CD8-positive, alpha-beta T cell (primary cell): ENCODE measurements at regions of chr13 and their contacts with region 1.

Region 1: DNA sequence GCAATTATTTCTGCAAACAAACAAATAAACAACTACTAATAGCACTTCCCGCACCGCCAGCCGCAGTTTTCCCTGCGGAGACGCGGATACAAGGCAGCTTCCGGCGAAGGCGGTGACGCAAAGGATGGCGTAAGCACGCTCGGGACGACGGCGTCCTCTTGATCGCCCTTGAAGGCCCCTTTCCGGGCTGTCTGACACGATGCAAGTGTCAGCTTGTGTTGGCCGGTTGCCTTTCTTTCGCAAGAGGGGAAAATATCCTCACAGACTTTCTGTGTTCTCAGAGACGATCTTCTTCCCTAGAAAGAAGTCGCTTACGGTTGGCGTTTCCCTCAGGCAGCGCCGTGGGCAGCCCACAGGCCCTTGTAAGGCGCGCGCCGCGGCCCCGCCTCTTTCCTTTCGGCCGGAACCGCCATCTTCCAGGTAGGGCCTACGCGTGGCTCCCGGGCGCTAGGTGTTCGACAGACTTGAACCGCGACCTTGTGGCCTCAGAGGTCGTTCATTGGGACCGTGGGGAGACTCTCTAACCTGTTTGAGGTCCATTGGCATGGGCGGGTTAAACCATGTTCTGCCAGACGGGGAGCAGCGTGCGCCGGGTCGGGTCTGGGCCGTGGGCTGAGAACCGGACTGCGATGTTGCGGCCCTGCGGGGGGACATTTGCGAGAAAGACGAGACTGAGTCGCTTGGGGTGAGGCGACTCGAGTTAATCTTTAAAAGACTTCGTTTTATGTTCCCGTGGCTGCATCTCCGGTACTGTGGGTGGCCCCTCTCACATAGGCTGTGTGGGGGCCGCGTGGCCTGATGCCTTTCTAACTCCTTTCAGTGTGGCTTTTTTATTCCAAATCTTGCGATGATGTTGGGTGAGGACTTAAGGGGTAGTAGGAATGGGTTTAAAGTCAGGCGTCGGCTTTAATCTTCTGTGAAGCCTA is at the start of gene RPL21:
- DNase-seq: peak; percentile 85 to 98 (median 91)
- ATAC-seq: peak; percentile 88
- H3K4me3 ChIP-seq: peak within 1 kb of the TSS; percentile 88 to 93
- H3K4me3 Mint-ChIP-seq: peak within 1 kb of the TSS; percentile 99
- H3K27ac ChIP-seq: peak within 1 kb of the TSS; percentile 96 to 98
- H3K27ac Mint-ChIP-seq: peak within 1 kb of the TSS; percentile 100
- H3K4me1 ChIP-seq: peaks cover 30% of the 10 kb centered on the region
- H3K4me1 Mint-ChIP-seq: peaks cover 57% of the 10 kb centered on the region
- H3K27me3 ChIP-seq: no peaks in the 10 kb centered on the region
- H3K27me3 Mint-ChIP-seq: no peaks in the 10 kb centered on the region
- CTCF ChIP-seq: no peak
- total RNA-seq, gene RPL21: 2,340 to 2,437 TPM

Region 2: GRCh38 chr13:25286969-25287961 is 1964.2 kb before region 1 on chr13 and contains the start of gene MTMR6:
- CTCF ChIA-PET with region 1: no interaction called
- POLR2A ChIA-PET with region 1: no interaction called
- intact Hi-C with region 1: loop called in 1 of 2 experiments (anchors 5 kb)
- DNase-seq: peak; percentile 90 to 98 (median 94)
- ATAC-seq: peak; percentile 81
- H3K4me3 ChIP-seq: peak within 1 kb of the TSS; percentile 83 to 95
- H3K4me3 Mint-ChIP-seq: peak within 1 kb of the TSS; percentile 98
- H3K27ac ChIP-seq: peak within 1 kb of the TSS; percentile 94 to 97
- H3K27ac Mint-ChIP-seq: peak within 1 kb of the TSS; percentile 99
- H3K4me1 ChIP-seq: peaks cover 23% of the 10 kb centered on the region
- H3K4me1 Mint-ChIP-seq: peaks cover 41% of the 10 kb centered on the region
- H3K27me3 ChIP-seq: peaks cover 0 to 2% of the 10 kb centered on the region in 2 experiments
- H3K27me3 Mint-ChIP-seq: peaks cover 10% of the 10 kb centered on the region
- CTCF ChIP-seq: peak; percentile 99
- total RNA-seq, gene MTMR6: 41.9 to 44.4 TPM

Region 3: DNA sequence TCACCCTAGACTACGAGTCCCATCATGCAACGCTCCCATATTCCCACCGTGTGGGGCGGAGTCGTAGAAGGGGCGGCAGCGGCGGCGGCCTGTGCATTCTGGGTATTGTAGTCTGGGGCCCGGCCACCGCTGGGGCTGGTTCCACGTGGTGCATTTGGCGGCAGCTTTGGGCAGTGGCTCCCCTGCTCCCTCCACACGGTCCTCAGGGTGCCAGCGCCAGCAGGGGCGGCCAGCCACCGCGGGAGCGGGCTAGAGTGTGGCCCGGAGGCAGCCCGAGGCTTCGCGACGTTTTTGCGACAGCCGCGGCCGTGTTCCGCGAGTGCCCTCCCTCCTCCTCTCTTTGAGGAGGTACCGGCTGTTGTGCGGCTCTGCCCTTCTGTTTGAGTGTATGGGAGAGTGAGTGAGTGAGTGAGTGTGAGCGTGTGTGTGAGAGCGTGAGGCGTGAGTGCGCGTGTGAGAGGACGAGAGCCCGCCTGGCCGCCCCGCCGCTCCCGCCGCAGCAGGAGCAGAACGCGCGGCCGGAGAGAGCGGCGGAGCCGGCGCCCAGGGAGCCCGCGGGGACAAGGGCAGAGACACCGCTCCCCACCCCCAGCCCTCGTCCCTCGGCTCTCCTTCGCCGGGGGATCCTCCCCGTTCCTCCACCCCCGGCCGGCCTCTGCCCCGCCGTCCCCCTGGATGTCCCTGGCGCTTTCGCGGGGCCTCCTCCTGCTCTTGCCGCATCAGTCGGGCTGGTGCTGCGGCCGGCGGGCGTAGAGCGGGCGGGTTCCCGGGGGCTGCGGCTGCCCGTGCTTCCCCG is 997.4 kb before region 1 on chr13 and contains the start of gene CDK8:
- CTCF ChIA-PET with region 1: no interaction called
- POLR2A ChIA-PET with region 1: no interaction called
- intact Hi-C with region 1: loop called in 1 of 2 experiments (anchors 5 kb)
- DNase-seq: peak; percentile 78 to 95 (median 90)
- ATAC-seq: peak; percentile 87
- H3K4me3 ChIP-seq: peak within 1 kb of the TSS; percentile 79 to 100
- H3K4me3 Mint-ChIP-seq: peak within 1 kb of the TSS; percentile 90
- H3K27ac ChIP-seq: peak within 1 kb of the TSS; percentile 59 to 92
- H3K27ac Mint-ChIP-seq: peak within 1 kb of the TSS; percentile 88
- H3K4me1 ChIP-seq: peaks cover 27% of the 10 kb centered on the region
- H3K4me1 Mint-ChIP-seq: peaks cover 37% of the 10 kb centered on the region
- H3K27me3 ChIP-seq: no peaks in the 10 kb centered on the region
- H3K27me3 Mint-ChIP-seq: peaks cover 2% of the 10 kb centered on the region
- CTCF ChIP-seq: no peak
- total RNA-seq, gene CDK8: 4.9 to 5.3 TPM

Region 4: GRCh38 chr13:27270594-27271520 is 19.4 kb after region 1 on chr13 and contains the start of gene RASL11A:
- CTCF ChIA-PET with region 1: interaction called, 10 read pairs
- POLR2A ChIA-PET with region 1: interaction called, 7 read pairs
- intact Hi-C with region 1: loop called (anchors 1 to 2 kb)
- DNase-seq: peak; percentile 49 to 85 (median 74)
- ATAC-seq: peak; percentile 93
- H3K4me3 ChIP-seq: peak within 1 kb of the TSS; percentile 58 to 88
- H3K4me3 Mint-ChIP-seq: peak within 1 kb of the TSS; percentile 92
- H3K27ac ChIP-seq: peak within 1 kb of the TSS in 1 of 2 experiments; percentile 46
- H3K27ac Mint-ChIP-seq: peak within 1 kb of the TSS; percentile 86
- H3K4me1 ChIP-seq: peaks cover 9% of the 10 kb centered on the region
- H3K4me1 Mint-ChIP-seq: peaks cover 25% of the 10 kb centered on the region
- H3K27me3 ChIP-seq: no peaks in the 10 kb centered on the region
- H3K27me3 Mint-ChIP-seq: peaks cover 2% of the 10 kb centered on the region
- CTCF ChIP-seq: peak; percentile 98
- total RNA-seq, gene RASL11A: 9.0 to 12.9 TPM

Region 5: GRCh38 chr13:27424246-27425157 is 173.1 kb after region 1 on chr13 and contains the start of gene GTF3A:
- CTCF ChIA-PET with region 1: no interaction called
- POLR2A ChIA-PET with region 1: no interaction called
- intact Hi-C with region 1: loop called (anchors 1 kb)
- DNase-seq: peak; percentile 74 to 95 (median 87)
- ATAC-seq: peak; percentile 57
- H3K4me3 ChIP-seq: peak within 1 kb of the TSS; percentile 76 to 83
- H3K4me3 Mint-ChIP-seq: peak within 1 kb of the TSS; percentile 82
- H3K27ac ChIP-seq: peak within 1 kb of the TSS; percentile 85 to 95
- H3K27ac Mint-ChIP-seq: peak within 1 kb of the TSS; percentile 97
- H3K4me1 ChIP-seq: peaks cover 43% of the 10 kb centered on the region
- H3K4me1 Mint-ChIP-seq: peaks cover 48% of the 10 kb centered on the region
- H3K27me3 ChIP-seq: no peaks in the 10 kb centered on the region
- H3K27me3 Mint-ChIP-seq: no peaks in the 10 kb centered on the region
- CTCF ChIP-seq: no peak
- total RNA-seq, gene GTF3A: 157 TPM

Region 6: GRCh38 chr13:28138012-28138755 is 886.8 kb after region 1 on chr13 and contains the start of gene PAN3:
- CTCF ChIA-PET with region 1: no interaction called
- POLR2A ChIA-PET with region 1: no interaction called
- intact Hi-C with region 1: loop called (anchors 2 to 5 kb)
- DNase-seq: peak; percentile 83 to 96 (median 93)
- ATAC-seq: peak; percentile 54
- H3K4me3 ChIP-seq: peak within 1 kb of the TSS; percentile 67 to 80
- H3K4me3 Mint-ChIP-seq: peak within 1 kb of the TSS; percentile 97
- H3K27ac ChIP-seq: peak within 1 kb of the TSS; percentile 90 to 97
- H3K27ac Mint-ChIP-seq: peak within 1 kb of the TSS; percentile 98
- H3K4me1 ChIP-seq: peaks cover 35% of the 10 kb centered on the region
- H3K4me1 Mint-ChIP-seq: peaks cover 52% of the 10 kb centered on the region
- H3K27me3 ChIP-seq: no peaks in the 10 kb centered on the region
- H3K27me3 Mint-ChIP-seq: no peaks in the 10 kb centered on the region
- CTCF ChIP-seq: no peak
- total RNA-seq, gene PAN3: 55.8 to 55.9 TPM

Region 7: GRCh38 chr13:28718543-28719226 is 1467.3 kb after region 1 on chr13 and contains the start of gene SLC46A3:
- CTCF ChIA-PET with region 1: no interaction called
- POLR2A ChIA-PET with region 1: no interaction called
- intact Hi-C with region 1: loop called in 1 of 2 experiments (anchors 5 kb)
- DNase-seq: peak; percentile 94 to 99 (median 97)
- ATAC-seq: peak; percentile 98
- H3K4me3 ChIP-seq: peak within 1 kb of the TSS; percentile 94 to 97
- H3K4me3 Mint-ChIP-seq: peak within 1 kb of the TSS; percentile 93
- H3K27ac ChIP-seq: peak within 1 kb of the TSS; percentile 88 to 91
- H3K27ac Mint-ChIP-seq: peak within 1 kb of the TSS; percentile 97
- H3K4me1 ChIP-seq: peaks cover 22% of the 10 kb centered on the region
- H3K4me1 Mint-ChIP-seq: peaks cover 40% of the 10 kb centered on the region
- H3K27me3 ChIP-seq: no peaks in the 10 kb centered on the region
- H3K27me3 Mint-ChIP-seq: no peaks in the 10 kb centered on the region
- CTCF ChIP-seq: no peak
- total RNA-seq, gene SLC46A3: 5.9 TPM